A673 (cell line): ENCODE measurements at regions of chr13 and their contacts with region 1.

Region 1: DNA sequence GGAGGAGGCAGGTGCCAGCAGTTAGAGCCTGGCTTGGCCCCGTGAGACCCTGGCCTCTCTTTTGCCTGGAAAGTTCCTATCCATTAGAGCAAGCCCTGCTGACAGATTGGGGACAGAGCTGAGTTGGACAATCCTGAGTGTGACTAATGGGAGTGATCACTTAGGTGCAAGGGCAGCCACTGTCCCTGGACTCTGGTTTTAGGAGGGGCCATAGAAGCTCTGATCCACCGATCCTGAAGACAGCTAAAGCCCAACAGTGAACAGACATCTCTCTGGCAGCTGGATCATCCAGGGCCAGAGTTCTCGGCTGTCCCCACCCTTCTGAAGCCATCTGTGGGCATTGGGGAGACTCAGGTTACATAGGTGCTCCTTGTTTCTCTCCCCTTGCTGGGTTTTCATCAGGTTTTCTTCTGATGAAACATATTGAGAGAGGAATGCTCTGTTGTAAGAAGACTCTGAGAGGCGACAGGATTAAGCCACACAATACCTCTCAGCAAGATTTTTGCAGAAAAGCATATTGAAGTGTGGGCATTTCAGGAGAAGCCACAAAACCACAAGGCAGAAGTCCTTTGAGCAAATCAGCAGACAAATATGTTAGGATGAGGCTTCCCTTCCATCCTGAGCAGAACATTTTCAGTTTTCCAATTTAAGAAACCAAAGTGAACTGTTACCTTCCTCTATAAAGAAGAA is 288.0 kb upstream of the MAB21L1 start:
- DNase-seq: no peak
- H3K4me3 ChIP-seq: no peak overlapping the region
- H3K27ac ChIP-seq: no peak overlapping the region
- H3K4me1 ChIP-seq: no peaks in the 10 kb centered on the region
- H3K27me3 ChIP-seq: no peaks in the 10 kb centered on the region
- CTCF ChIP-seq: no peak

Region 2: GRCh38 chr13:34591900-34592529 is 1172.5 kb before region 1 on chr13:
- CTCF ChIA-PET with region 1: no interaction called
- POLR2A ChIA-PET with region 1: no interaction called
- intact Hi-C with region 1: loop called (anchors 5 kb)
- DNase-seq: no peak
- H3K4me3 ChIP-seq: no peak overlapping the region
- H3K27ac ChIP-seq: no peak overlapping the region
- H3K4me1 ChIP-seq: no peaks in the 10 kb centered on the region
- H3K27me3 ChIP-seq: no peaks in the 10 kb centered on the region
- CTCF ChIP-seq: no peak

Region 3: DNA sequence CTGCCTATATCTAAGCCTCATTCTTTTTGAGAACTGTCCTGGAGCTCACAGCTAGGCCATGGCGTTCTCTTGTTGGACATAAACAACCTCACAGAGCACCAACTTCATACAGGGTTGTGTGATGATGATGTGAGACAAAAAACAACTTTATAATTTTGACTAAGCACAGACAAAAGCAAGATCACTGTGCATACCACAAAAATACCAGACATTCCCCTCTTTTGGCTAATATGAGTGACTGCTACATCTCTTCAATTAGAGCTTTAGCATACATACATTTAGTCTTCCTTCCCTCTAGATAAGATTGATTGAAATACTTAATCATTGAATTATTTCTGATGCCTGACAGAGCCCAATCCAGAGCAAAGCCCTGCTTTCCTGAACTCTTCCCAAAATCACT is 296.3 kb before region 1 on chr13:
- CTCF ChIA-PET with region 1: no interaction called
- POLR2A ChIA-PET with region 1: no interaction called
- intact Hi-C with region 1: no loop called
- DNase-seq: no peak
- H3K4me3 ChIP-seq: no peak overlapping the region
- H3K27ac ChIP-seq: no peak overlapping the region
- H3K4me1 ChIP-seq: no peaks in the 10 kb centered on the region
- H3K27me3 ChIP-seq: no peaks in the 10 kb centered on the region
- CTCF ChIP-seq: no peak